ENCODE measurements at regions of chr10 and their contacts with region 1.

Region 1: GRCh38 chr10:53904506-53905238 is 896.4 kb downstream of the PCDH15 start:
- DNase-seq: peak; percentile 73
- H3K4me3 Mint-ChIP-seq: peak overlapping the region; percentile 66
- H3K27ac Mint-ChIP-seq: peak overlapping the region; percentile 68
- H3K4me1 Mint-ChIP-seq: peaks cover 9% of the 10 kb centered on the region
- H3K27me3 Mint-ChIP-seq: no peaks in the 10 kb centered on the region
- CTCF ChIP-seq: no peak

Region 2: GRCh38 chr10:53886325-53887300 is 18.1 kb before region 1 on chr10:
- CTCF ChIA-PET with region 1: interaction called, 4 read pairs
- POLR2A ChIA-PET with region 1: interaction called, 22 read pairs
- intact Hi-C with region 1: no loop called
- DNase-seq: peak; percentile 56
- H3K4me3 Mint-ChIP-seq: peak overlapping the region; percentile 50
- H3K27ac Mint-ChIP-seq: peak overlapping the region; percentile 94
- H3K4me1 Mint-ChIP-seq: peaks cover 16% of the 10 kb centered on the region
- H3K27me3 Mint-ChIP-seq: no peaks in the 10 kb centered on the region
- CTCF ChIP-seq: no peak

Region 3: DNA sequence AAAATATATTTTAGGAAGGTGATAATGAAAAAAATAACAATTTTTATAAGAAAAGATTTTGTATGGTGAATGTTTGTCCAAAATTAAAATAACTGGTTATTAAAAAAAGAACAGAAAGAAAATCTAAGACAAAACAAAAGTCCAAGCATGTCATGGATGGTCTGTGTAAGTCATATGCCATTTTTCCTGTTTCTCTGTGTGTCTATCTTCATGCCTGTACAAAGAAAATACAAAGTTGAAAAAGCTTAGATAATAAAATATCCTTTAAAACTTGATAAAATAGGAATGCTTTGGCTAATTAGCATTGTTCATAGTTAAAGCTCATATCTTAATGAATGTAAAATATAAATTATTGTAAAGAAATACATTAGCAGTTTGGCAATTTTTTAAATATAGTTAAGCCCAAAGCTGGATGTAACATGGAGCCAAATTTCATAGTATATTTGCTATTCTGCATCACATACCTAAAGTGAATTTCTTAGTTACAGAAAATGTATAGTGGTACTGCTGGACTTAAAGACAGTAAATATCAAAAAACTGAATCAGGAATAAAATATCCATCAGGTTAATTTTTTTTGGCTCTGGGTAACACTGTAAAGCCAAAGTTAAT is 235.3 kb after region 1 on chr10:
- CTCF ChIA-PET with region 1: no interaction called
- POLR2A ChIA-PET with region 1: no interaction called
- intact Hi-C with region 1: no loop called
- DNase-seq: peak; percentile 27
- H3K4me3 Mint-ChIP-seq: no peak overlapping the region
- H3K27ac Mint-ChIP-seq: no peak overlapping the region
- H3K4me1 Mint-ChIP-seq: no peaks in the 10 kb centered on the region
- H3K27me3 Mint-ChIP-seq: no peaks in the 10 kb centered on the region
- CTCF ChIP-seq: no peak

Measured in MCF 10A (cell line).